ENCODE measurements at regions of chr11 and their contacts with region 1.

Region 1: GRCh38 chr11:93330446-93330984 is at the start of gene DEUP1:
- DNase-seq: peak; percentile 24 to 70 (median 38)
- ATAC-seq: peak; percentile 26 to 81 (median 57)
- H3K4me3 ChIP-seq: peak within 1 kb of the TSS; percentile 2 to 54 (median 34)
- H3K27ac ChIP-seq: no peak within 1 kb of the TSS
- H3K4me1 ChIP-seq: peaks cover 0 to 12% (median 0%) of the 10 kb centered on the region in 12 donors
- H3K27me3 ChIP-seq: peaks cover 0 to 26% (median 7%) of the 10 kb centered on the region in 9 donors
- CTCF ChIP-seq: no peak
- POLR2A ChIP-seq: no peak
- total RNA-seq, gene DEUP1: not detected

Region 2: GRCh38 chr11:92246630-92247029 is 1083.9 kb before region 1 on chr11:
- intact Hi-C with region 1: no loop called
- DNase-seq: no peak
- ATAC-seq: no peak
- H3K4me3 ChIP-seq: no peak overlapping the region
- H3K27ac ChIP-seq: no peak overlapping the region
- H3K4me1 ChIP-seq: no peaks in the 10 kb centered on the region
- H3K27me3 ChIP-seq: peaks cover 0 to 6% (median 0%) of the 10 kb centered on the region in 9 donors
- CTCF ChIP-seq: no peak
- POLR2A ChIP-seq: no peak

Region 3: DNA sequence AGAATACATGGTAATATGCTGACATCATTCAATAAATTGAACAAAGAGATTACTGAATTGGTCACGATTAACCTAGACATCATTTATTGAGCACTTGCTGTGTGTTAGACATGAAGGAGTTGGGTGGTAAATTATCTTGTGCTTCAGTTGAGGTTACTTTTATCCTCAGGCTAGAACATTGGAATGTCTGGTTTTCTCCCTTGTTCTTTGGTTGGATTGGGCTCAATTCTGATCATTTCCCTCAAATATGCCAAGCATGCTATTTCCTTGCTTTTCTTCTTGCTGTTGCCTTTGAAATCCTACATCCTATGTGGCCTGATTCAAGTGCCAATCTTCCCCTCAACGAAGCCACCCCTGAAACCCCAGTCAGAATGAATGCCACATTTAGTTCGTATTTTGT is 65.8 kb after region 1 on chr11:
- intact Hi-C with region 1: loop called in 1 of 10 experiments (anchors 10 kb)
- DNase-seq: no peak
- ATAC-seq: no peak
- H3K4me3 ChIP-seq: no peak overlapping the region
- H3K27ac ChIP-seq: no peak overlapping the region
- H3K4me1 ChIP-seq: peaks cover 0 to 7% (median 0%) of the 10 kb centered on the region in 12 donors
- H3K27me3 ChIP-seq: no peaks in the 10 kb centered on the region
- CTCF ChIP-seq: no peak
- POLR2A ChIP-seq: no peak

Region 4: GRCh38 chr11:93432247-93432646 is 101.7 kb after region 1 on chr11:
- intact Hi-C with region 1: no loop called
- DNase-seq: no peak
- ATAC-seq: no peak
- H3K4me3 ChIP-seq: no peak overlapping the region
- H3K27ac ChIP-seq: no peak overlapping the region
- H3K4me1 ChIP-seq: no peaks in the 10 kb centered on the region
- H3K27me3 ChIP-seq: no peaks in the 10 kb centered on the region
- CTCF ChIP-seq: no peak
- POLR2A ChIP-seq: no peak

Region 5: DNA sequence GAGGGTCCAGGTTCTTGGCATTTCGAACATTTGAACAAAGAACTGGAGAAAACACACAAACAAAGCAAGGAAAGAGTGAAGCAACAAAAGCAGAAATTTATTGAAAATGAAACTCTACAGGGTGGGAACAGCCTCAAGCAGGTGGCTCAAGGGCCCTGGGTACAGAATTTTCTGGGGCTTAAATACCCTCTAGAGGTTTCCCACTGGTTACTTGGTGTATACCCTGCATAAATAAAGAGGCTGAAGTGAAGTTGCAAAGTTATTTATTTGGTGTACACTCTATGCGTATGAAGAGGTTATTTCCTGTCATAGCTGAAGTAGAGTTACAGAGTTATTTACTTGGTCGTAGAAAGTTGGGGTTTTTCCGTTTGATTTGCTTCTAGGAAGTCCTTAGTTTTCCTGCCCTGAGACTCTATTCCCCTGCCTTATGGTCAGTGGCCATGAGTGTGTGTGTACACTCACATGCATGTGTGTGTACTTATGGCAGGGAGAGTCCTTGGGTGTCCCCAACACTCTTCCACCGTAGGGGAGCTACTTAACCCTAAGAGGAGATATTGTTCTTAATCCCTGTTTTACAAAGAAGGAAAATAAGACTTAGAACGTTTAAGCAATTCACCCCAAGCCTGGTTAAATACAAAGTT is 218.3 kb after region 1 on chr11:
- intact Hi-C with region 1: loop called in 1 of 10 experiments (anchors 5 kb)
- DNase-seq: no peak
- ATAC-seq: no peak
- H3K4me3 ChIP-seq: no peak overlapping the region
- H3K27ac ChIP-seq: no peak overlapping the region
- H3K4me1 ChIP-seq: peaks cover 0 to 2% (median 0%) of the 10 kb centered on the region in 12 donors
- H3K27me3 ChIP-seq: peaks cover 0 to under 1% (median 0%) of the 10 kb centered on the region in 9 donors
- CTCF ChIP-seq: no peak
- POLR2A ChIP-seq: no peak

Measured in heart left ventricle (tissue), 16 donors.